ENCODE measurements at regions of chr12 and their contacts with region 1.

Region 1: DNA sequence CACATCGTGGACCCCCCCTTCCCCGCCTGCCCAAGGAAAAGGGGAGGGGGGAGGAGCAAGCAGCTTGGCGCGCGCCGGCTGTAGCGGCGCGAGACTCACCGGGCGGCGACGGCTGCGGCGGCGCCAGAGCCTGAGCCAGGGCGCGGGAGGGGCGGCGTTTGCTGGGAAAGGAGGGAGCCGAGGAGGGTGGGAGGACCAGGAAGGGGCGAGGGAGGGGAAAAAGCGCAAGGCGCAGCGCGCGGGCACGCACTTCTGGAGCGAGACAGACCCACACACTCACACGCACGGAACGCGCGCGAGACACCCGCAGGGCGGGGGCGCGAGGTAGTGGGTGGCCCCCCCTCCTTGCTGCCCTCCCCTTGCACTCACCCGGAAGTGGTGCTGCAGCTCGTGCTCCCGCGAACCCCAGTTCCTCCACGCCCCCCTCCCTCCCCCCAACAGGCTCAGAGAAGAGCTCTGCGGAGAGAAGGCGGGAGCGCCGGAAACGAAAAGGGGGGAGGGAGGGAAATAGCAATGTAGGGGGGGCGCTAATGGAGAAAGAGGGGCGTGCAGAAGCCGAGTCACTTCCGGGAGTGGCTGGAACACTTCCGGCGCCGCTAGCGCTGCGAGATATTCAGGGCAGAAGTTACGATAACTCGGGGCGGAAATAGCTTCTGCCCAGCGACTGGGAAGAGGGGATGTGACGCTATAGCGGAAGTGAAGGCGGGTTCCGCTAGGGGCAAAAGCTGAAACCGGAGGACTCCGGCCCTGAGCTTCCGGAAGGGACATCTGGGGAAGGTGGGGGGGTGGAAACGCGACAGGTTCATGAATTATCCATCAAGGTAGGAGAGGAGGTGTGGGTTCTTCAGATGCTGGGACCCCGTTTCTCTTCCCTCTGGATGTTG is at the start of gene ZNF384:
- DNase-seq: peak; percentile 98
- ATAC-seq: peak; percentile 94 to 98
- H3K4me3 ChIP-seq: peak within 1 kb of the TSS; percentile 79 to 92 (median 88)
- H3K27ac ChIP-seq: peak within 1 kb of the TSS; percentile 94 to 98 (median 96)
- H3K4me1 ChIP-seq: peaks cover 27 to 30% of the 10 kb centered on the region in 2 donors
- H3K27me3 ChIP-seq: no peaks in the 10 kb centered on the region
- CTCF ChIP-seq: peak in 4 of 5 experiments; percentile 27 to 54 (median 38)
- POLR2A ChIP-seq: peak; percentile 44 to 68
- total RNA-seq, gene ZNF384: 22.4 to 35.3 (median 27.9) TPM

Region 2: GRCh38 chr12:6335451-6336078 is 353.7 kb before region 1 on chr12:
- in situ Hi-C with region 1: no loop called
- intact Hi-C with region 1: loop called (anchors 5 kb)
- DNase-seq: peak; percentile 69 to 83
- ATAC-seq: peak; percentile 48 to 50
- H3K4me3 ChIP-seq: peak overlapping the region; percentile 58 to 99 (median 78)
- H3K27ac ChIP-seq: peak overlapping the region; percentile 92 to 99 (median 96)
- H3K4me1 ChIP-seq: peaks cover 56 to 59% of the 10 kb centered on the region in 2 donors
- H3K27me3 ChIP-seq: no peaks in the 10 kb centered on the region
- CTCF ChIP-seq: peak in 4 of 5 experiments; percentile 40 to 66 (median 59)
- POLR2A ChIP-seq: no peak

Region 3: DNA sequence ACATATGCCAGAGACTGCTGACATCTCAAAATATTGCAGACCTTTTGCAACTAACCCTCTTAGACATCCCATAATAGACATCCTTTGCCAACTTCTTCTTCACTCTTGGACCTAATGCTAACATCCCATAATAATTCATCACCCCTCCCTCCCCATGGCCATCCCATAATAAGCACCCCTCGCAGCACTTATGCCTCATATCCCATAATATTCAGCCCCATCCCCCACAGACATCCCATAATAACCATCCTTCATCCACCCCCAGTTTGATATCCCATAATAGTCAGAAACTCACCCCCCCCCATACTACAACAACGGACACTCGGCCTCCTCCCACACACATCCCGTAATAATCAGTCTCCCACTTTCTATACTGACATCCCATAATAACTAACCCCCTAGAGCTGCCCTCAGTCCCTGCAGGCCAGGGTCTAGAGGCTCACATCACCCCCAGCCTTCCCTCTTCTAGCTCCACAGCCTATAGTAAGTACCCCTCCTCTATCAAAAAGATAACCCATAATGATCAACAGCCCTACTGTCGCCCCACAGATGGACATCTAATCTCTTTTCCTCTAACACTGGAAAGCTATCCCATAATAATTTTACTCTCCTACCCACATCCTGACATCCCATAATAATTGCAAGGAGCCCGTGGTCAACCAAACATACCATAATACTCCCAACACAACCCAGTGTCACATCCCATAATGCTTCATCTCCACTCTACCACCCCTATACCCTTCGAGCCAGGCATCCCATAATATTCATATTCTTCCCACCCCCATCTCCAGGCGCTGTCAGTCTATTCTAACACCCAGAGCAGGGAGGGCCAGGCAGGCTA is 81.3 kb before region 1 on chr12:
- in situ Hi-C with region 1: no loop called
- intact Hi-C with region 1: loop called (anchors 1 kb)
- DNase-seq: peak in 1 of 2 donors; percentile 52
- ATAC-seq: peak; percentile 18 to 34
- H3K4me3 ChIP-seq: peak overlapping the region in 1 of 4 donors; percentile 98
- H3K27ac ChIP-seq: peak overlapping the region; percentile 95 to 99 (median 97)
- H3K4me1 ChIP-seq: peaks cover 44 to 52% of the 10 kb centered on the region in 2 donors
- H3K27me3 ChIP-seq: no peaks in the 10 kb centered on the region
- CTCF ChIP-seq: no peak
- POLR2A ChIP-seq: no peak

Region 4: DNA sequence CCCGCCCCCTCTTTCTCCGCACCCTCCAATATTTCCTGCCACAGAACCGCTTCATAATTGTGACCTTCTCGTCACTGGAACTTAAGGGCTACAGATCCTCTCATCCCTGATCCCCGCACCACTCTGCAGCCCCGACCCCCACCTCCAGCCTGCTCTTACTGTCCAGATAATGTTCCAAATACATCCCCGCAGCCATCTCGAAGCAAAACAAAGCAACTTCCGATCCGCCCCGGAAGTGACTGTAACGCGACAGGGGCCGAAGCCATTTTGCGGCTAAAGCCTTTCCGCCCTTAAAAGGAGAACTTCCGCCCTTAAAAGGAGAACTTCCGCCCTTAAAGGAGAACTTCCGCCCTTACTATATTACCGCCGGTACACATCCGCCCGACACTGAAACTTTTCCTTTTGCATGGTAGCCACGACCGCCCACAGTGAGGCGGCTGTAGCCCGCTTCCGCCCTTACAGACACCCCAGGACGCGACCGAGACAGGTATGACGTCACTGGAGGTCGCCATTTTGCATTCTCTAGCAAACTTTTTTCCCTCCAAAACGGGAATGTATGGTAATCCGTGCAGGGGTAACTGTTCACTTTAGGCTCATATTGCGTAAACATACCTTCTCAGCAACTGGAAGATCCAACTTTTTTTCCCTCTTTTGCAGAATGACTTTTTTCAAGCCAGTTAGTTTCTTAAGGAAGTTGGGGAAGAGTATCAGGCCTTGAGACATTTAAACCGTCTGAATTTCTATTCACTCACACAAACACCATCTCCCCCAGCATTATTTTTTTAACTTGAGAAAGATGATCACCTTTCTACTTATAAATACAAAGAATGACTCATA is 26.1 kb before region 1 on chr12 and contains the start of gene ING4:
- in situ Hi-C with region 1: no loop called
- intact Hi-C with region 1: loop called (anchors 1 kb)
- DNase-seq: peak; percentile 97 to 99
- ATAC-seq: peak; percentile 100
- H3K4me3 ChIP-seq: peak within 1 kb of the TSS; percentile 66 to 97 (median 81)
- H3K27ac ChIP-seq: peak within 1 kb of the TSS; percentile 78 to 84 (median 80)
- H3K4me1 ChIP-seq: peaks cover 12 to 18% of the 10 kb centered on the region in 2 donors
- H3K27me3 ChIP-seq: no peaks in the 10 kb centered on the region
- CTCF ChIP-seq: no peak
- POLR2A ChIP-seq: no peak
- total RNA-seq, gene ING4: 12.8 to 28.9 (median 19.7) TPM

Region 5: DNA sequence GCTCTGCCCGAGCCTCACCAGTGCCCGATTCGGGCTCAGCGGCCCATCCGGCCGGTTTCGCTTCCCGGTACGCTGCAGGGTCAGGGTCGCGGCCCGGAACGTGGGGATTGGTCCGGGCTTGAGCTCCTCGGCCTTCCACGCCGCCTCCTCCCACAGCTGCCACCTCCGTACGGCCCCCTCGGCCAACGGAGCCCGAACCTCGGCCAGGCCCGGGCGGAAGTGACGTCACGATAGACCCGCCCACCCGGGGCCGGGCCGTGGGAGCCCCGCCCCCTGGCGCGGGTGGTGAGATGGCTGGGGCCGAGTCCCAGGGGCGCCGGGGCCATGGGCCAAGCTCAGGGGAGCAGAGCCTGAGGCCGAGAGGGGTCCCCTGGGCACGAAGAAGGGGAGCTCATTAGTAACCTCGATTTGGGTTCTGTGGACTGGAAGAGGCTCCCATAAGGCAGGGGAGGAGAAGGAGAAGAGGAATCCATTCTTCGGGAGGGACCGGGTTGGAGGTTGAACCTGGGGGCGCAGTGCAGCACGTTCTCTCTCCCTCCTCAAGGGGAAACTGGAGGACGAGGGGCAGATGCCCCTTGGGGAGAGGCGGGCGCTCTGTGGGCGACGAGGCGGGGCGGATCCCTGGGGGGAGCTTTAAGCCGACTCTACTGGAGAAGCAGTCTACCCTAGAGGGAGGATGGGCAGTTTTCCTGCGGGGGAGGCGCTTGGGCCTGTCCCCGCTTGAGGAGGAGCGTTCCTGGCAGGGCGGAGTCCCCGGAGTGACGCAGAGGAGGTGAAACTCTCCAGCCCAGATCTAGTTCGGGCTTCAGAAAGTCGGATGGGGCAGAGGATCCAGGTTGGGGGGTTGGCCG is 63.9 kb after region 1 on chr12 and contains the start of gene MLF2:
- in situ Hi-C with region 1: no loop called
- intact Hi-C with region 1: loop called (anchors 1 kb)
- DNase-seq: peak; percentile 98 to 99
- ATAC-seq: peak; percentile 95 to 97
- H3K4me3 ChIP-seq: peak within 1 kb of the TSS; percentile 67 to 95 (median 92)
- H3K27ac ChIP-seq: peak within 1 kb of the TSS; percentile 89 to 100 (median 98)
- H3K4me1 ChIP-seq: peaks cover 10 to 12% of the 10 kb centered on the region in 2 donors
- H3K27me3 ChIP-seq: no peaks in the 10 kb centered on the region
- CTCF ChIP-seq: peak in 1 of 5 experiments; percentile 98
- POLR2A ChIP-seq: peak; percentile 93 to 94
- total RNA-seq, gene MLF2: 105 to 181 (median 165) TPM

Region 6: DNA sequence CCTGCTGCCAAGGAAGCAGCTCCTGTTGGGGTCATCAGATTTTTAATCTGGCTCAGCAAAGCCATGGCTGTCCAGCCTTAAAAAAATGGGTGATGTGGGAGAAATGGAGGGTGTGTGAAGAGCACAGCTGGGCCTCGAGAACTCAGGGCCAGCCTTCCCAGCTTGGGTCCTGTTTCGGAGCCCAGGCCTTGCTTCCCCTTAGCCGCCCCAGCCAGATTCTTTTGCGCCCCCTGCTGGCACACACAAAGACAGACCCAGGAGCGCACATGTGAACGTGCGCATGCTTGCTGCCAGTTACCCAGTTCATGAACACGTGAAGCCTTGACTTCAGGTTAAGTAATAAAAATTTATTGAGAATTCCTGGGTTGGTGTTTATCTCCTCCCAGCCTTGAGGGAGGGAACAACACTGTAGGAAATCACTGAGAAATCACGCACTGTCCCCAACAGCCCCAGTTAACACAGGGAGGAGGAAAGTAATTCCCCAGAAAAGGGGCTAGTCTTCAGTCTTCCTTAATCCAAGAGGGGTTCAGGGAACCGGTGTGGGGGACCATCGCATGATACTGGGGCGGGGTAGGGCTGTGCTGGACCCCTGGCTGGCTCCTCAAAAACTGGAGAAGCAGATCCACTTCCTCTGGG is 275.9 kb after region 1 on chr12:
- in situ Hi-C with region 1: no loop called
- intact Hi-C with region 1: loop called (anchors 10 kb)
- DNase-seq: peak; percentile 71 to 86
- ATAC-seq: peak; percentile 60 to 77
- H3K4me3 ChIP-seq: no peak overlapping the region
- H3K27ac ChIP-seq: peak overlapping the region; percentile 65 to 84 (median 72)
- H3K4me1 ChIP-seq: peaks cover 33 to 37% of the 10 kb centered on the region in 2 donors
- H3K27me3 ChIP-seq: no peaks in the 10 kb centered on the region
- CTCF ChIP-seq: peak; percentile 88 to 92 (median 89)
- POLR2A ChIP-seq: no peak

Region 7: GRCh38 chr12:7498832-7499231 is 809.6 kb after region 1 on chr12:
- in situ Hi-C with region 1: no loop called
- intact Hi-C with region 1: no loop called
- DNase-seq: no peak
- ATAC-seq: peak; percentile 19 to 53
- H3K4me3 ChIP-seq: peak overlapping the region in 1 of 4 donors; percentile 22
- H3K27ac ChIP-seq: peak overlapping the region in 2 of 4 donors; percentile 7 to 11
- H3K4me1 ChIP-seq: no peaks in the 10 kb centered on the region
- H3K27me3 ChIP-seq: no peaks in the 10 kb centered on the region
- CTCF ChIP-seq: no peak
- POLR2A ChIP-seq: no peak

Measured in gastrocnemius medialis (tissue), 4 donors.